Common myeloid progenitor, CD34-positive (primary cell): ENCODE measurements at regions of chr9 and their contacts with region 1.

Region 1: GRCh38 chr9:35923927-35924763 is 14.9 kb downstream of the SPAAR start:
- DNase-seq: peak in 2 of 3 donors; percentile 76 to 84
- H3K4me3 ChIP-seq: peak overlapping the region in 1 of 7 experiments; percentile 11
- H3K27ac ChIP-seq: peak overlapping the region in 1 of 2 experiments; percentile 74
- H3K4me1 ChIP-seq: peaks cover 6 to 39% (median 30%) of the 10 kb centered on the region in 4 experiments
- H3K27me3 ChIP-seq: no peaks in the 10 kb centered on the region

Region 2: DNA sequence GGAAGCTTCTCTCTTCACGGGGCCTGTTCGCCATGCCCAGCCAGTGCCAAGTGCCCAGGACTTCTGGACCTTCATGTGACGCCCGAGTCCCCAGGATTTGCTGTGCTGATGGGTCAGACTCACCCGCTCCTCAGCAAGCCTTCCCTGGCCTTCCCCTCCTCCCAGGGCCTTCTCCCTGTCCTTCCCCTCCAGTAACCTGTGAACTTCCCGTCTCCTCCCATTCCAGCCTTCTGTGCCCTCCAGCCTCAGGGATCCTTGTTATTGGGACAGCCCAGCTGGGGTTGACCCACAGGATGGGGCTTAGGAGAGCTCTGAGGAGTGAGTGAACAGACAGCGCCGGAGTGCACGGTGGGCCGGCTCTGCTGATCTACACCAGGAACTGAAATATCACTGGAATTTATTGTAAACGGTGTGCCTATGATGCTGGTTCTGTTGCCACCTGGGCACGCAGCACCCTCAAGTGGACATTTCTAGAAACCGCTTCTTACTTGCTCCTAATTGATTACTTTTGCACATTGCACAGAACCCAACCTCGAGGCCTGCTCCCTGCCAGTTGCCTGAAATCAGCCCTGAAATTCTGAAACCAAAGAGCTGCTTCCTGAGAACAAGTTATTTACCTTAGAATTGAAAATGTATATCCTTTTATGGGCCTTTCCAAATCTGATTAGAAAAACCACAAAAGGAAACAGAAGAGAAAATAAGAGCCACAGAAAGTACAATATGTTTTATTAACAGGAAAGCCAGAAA is 13.4 kb before region 1 on chr9:
- CTCF ChIA-PET with region 1: interaction called, 11 read pairs
- POLR2A ChIA-PET with region 1: interaction called, 4 read pairs
- DNase-seq: peak; percentile 56 to 76 (median 69)
- H3K4me3 ChIP-seq: peak overlapping the region in 1 of 7 experiments; percentile 36
- H3K27ac ChIP-seq: peak overlapping the region in 1 of 2 experiments; percentile 60
- H3K4me1 ChIP-seq: peaks cover 2 to 64% (median 49%) of the 10 kb centered on the region in 4 experiments
- H3K27me3 ChIP-seq: no peaks in the 10 kb centered on the region

Region 3: GRCh38 chr9:35945341-35946018 is 21.3 kb after region 1 on chr9:
- CTCF ChIA-PET with region 1: interaction called, 63 read pairs
- POLR2A ChIA-PET with region 1: interaction called, 4 read pairs
- DNase-seq: peak; percentile 36 to 61 (median 52)
- H3K4me3 ChIP-seq: peak overlapping the region in 2 of 7 experiments; percentile 20 to 32
- H3K27ac ChIP-seq: no peak overlapping the region
- H3K4me1 ChIP-seq: peaks cover 2 to 28% (median 16%) of the 10 kb centered on the region in 4 experiments
- H3K27me3 ChIP-seq: no peaks in the 10 kb centered on the region